ENCODE measurements at regions of chr21 and their contacts with region 1.

Region 1: GRCh38 chr21:36909901-36910561 is 56.4 kb downstream of the HLCS start:
- DNase-seq: peak; percentile 31
- H3K4me3 Mint-ChIP-seq: peak overlapping the region; percentile 45
- H3K27ac Mint-ChIP-seq: peak overlapping the region; percentile 100
- H3K4me1 Mint-ChIP-seq: peaks cover 26% of the 10 kb centered on the region
- H3K27me3 Mint-ChIP-seq: no peaks in the 10 kb centered on the region
- CTCF ChIP-seq: no peak

Region 2: DNA sequence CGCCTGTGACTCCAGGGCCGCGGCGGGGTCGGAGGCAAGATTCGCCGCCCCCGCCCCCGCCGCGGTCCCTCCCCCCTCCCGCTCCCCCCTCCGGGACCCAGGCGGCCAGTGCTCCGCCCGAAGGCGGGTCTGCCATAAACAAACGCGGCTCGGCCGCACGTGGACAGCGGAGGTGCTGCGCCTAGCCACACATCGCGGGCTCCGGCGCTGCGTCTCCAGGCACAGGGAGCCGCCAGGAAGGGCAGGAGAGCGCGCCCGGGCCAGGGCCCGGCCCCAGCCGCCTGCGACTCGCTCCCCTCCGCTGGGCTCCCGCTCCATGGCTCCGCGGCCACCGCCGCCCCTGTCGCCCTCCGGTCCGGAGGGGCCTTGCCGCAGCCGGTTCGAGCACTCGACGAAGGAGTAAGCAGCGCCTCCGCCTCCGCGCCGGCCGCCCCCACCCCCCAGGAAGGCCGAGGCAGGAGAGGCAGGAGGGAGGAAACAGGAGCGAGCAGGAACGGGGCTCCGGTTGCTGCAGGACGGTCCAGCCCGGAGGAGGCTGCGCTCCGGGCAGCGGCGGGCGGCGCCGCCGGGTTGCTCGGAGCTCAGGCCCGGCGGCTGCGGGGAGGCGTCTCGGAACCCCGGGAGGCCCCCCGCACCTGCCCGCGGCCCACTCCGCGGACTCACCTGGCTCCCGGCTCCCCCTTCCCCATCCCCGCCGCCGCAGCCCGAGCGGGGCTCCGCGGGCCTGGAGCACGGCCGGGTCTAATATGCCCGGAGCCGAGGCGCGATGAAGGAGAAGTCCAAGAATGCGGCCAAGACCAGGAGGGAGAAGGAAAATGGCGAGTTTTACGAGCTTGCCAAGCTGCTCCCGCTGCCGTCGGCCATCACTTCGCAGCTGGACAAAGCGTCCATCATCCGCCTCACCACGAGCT is 210.8 kb before region 1 on chr21 and contains the start of gene SIM2:
- CTCF ChIA-PET with region 1: no interaction called
- intact Hi-C with region 1: loop called (anchors 5 kb)
- DNase-seq: peak; percentile 77
- H3K4me3 Mint-ChIP-seq: peak within 1 kb of the TSS; percentile 82
- H3K27ac Mint-ChIP-seq: peak within 1 kb of the TSS; percentile 72
- H3K4me1 Mint-ChIP-seq: no peaks in the 10 kb centered on the region
- H3K27me3 Mint-ChIP-seq: no peaks in the 10 kb centered on the region
- CTCF ChIP-seq: no peak
- total RNA-seq, gene SIM2: 15.1 and 15.4 TPM in 2 replicates

Region 3: DNA sequence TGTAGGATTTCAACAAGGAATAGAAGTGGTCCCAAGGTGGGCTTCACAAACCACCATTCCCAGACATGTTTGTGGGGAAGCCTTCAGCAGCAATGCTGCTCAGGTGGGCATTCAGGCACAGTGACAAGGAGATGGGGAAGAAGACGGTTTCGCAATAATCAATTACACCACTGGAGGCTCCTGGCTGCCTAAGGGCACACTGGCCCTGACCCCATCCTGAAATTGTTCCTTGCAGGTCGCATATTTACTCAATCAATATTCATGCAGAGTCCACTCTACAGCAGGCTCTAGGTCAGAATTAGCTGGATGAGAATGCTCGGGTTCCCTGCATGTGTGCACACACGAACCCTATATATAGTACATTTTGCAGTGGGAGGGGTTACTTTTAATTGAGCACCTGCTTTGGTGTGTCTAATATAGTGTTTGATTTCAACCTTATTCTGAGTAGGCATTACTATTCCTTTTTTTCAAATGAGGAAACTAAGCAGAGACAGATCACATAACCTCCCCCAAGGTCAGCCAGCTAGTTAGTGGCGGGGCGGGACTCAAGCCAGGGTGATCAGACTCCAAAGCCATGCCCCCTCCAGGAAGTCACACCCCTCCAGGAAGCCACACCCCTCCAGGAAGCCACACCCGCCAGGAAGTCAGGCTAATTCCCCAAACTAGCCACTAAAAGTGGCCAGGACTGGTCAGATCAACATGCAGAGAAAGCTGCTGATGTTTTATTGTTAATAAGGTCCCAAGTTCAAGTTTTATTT is 50.1 kb before region 1 on chr21:
- CTCF ChIA-PET with region 1: no interaction called
- intact Hi-C with region 1: loop called (anchors 5 kb)
- DNase-seq: peak; percentile 84
- H3K4me3 Mint-ChIP-seq: no peak overlapping the region
- H3K27ac Mint-ChIP-seq: no peak overlapping the region
- H3K4me1 Mint-ChIP-seq: peaks cover 25% of the 10 kb centered on the region
- H3K27me3 Mint-ChIP-seq: no peaks in the 10 kb centered on the region
- CTCF ChIP-seq: no peak